CD4-positive, alpha-beta memory T cell (primary cell): ENCODE measurements at regions of chr3 and their contacts with region 1.

Region 1: GRCh38 chr3:44510000-44510368 is 32.5 kb upstream of the ZNF445 start:
- DNase-seq: no peak
- H3K4me3 ChIP-seq: peak overlapping the region; percentile 85 to 92
- H3K4me3 Mint-ChIP-seq: peak overlapping the region; percentile 94 to 98 (median 96)
- H3K27ac ChIP-seq: peak overlapping the region; percentile 75
- H3K27ac Mint-ChIP-seq: peak overlapping the region; percentile 84 to 97 (median 94)
- H3K4me1 ChIP-seq: peaks cover 21% of the 10 kb centered on the region
- H3K4me1 Mint-ChIP-seq: peaks cover 28 to 50% (median 38%) of the 10 kb centered on the region in 4 donors
- H3K27me3 ChIP-seq: no peaks in the 10 kb centered on the region
- H3K27me3 Mint-ChIP-seq: no peaks in the 10 kb centered on the region

Region 2: DNA sequence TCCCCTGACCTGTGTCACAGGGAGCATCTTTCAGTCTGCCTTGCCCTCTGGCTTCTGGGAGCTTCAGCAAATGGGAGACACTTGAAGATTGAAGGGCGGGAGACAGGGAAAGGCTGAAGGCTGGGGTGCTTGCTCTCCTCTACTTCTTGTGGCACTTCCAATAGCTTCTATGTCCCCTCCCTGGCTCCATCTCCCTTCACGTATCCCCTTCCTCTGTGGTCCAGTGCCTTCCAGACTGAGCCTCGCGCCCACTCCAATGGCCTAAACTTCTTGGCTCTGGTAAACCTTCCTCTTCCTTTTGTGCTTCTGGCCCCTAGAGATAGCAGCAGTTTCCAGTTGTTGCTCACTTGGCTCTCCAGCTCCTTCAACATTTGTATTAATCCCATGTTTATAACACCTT is 338.1 kb before region 1 on chr3:
- CTCF ChIA-PET with region 1: no interaction called
- POLR2A ChIA-PET with region 1: no interaction called
- intact Hi-C with region 1: no loop called
- DNase-seq: no peak
- H3K4me3 ChIP-seq: no peak overlapping the region
- H3K4me3 Mint-ChIP-seq: no peak overlapping the region
- H3K27ac ChIP-seq: no peak overlapping the region
- H3K27ac Mint-ChIP-seq: peak overlapping the region in 1 of 7 donors; percentile 14
- H3K4me1 ChIP-seq: no peaks in the 10 kb centered on the region
- H3K4me1 Mint-ChIP-seq: no peaks in the 10 kb centered on the region
- H3K27me3 ChIP-seq: peaks cover 4% of the 10 kb centered on the region
- H3K27me3 Mint-ChIP-seq: peaks cover 6 to 15% of the 10 kb centered on the region in 2 donors

Region 3: DNA sequence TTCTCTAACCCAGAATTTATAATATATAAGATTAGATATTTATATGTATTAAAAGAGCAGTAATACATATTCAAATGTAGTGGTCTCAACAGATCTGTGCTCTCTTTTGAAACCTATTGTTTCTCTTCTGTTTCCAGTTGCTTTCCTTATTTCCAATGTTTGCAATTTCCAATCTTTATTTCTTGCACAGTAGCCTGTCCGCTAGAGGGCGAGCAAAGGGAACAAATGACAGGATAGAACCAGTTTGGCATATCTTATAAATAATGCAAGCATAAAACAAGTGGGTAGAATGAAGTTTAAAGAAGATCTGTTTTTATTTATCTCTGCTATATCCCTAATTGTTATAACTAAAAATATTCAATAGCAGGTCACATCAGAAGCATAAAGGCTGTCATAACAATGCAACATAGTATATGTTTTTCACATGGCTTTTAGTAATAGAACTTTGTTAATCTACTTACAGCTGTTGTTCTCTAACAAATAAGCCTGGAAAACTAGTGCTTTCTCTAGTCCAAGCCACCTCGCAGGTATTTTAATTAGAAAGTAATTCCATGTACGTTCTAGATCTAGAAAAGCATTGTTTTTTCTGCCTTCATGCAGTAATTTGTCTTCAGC is 186.5 kb before region 1 on chr3:
- CTCF ChIA-PET with region 1: interaction called, 3 read pairs
- POLR2A ChIA-PET with region 1: interaction called, 3 read pairs
- intact Hi-C with region 1: loop called (anchors 5 kb)
- DNase-seq: peak in 4 of 5 donors; percentile 39 to 49 (median 46)
- H3K4me3 ChIP-seq: no peak overlapping the region
- H3K4me3 Mint-ChIP-seq: no peak overlapping the region
- H3K27ac ChIP-seq: no peak overlapping the region
- H3K27ac Mint-ChIP-seq: no peak overlapping the region
- H3K4me1 ChIP-seq: no peaks in the 10 kb centered on the region
- H3K4me1 Mint-ChIP-seq: peaks cover 0 to 4% (median 0%) of the 10 kb centered on the region in 4 donors
- H3K27me3 ChIP-seq: no peaks in the 10 kb centered on the region
- H3K27me3 Mint-ChIP-seq: peaks cover 6 to 7% of the 10 kb centered on the region in 2 donors

Region 4: GRCh38 chr3:44363591-44363990 is 146.4 kb before region 1 on chr3:
- CTCF ChIA-PET with region 1: no interaction called
- POLR2A ChIA-PET with region 1: no interaction called
- intact Hi-C with region 1: no loop called
- DNase-seq: no peak
- H3K4me3 ChIP-seq: no peak overlapping the region
- H3K4me3 Mint-ChIP-seq: no peak overlapping the region
- H3K27ac ChIP-seq: no peak overlapping the region
- H3K27ac Mint-ChIP-seq: no peak overlapping the region
- H3K4me1 ChIP-seq: no peaks in the 10 kb centered on the region
- H3K4me1 Mint-ChIP-seq: peaks cover 0 to 3% (median 0%) of the 10 kb centered on the region in 4 donors
- H3K27me3 ChIP-seq: no peaks in the 10 kb centered on the region
- H3K27me3 Mint-ChIP-seq: no peaks in the 10 kb centered on the region

Region 5: GRCh38 chr3:44477312-44478030 is 32.5 kb before region 1 on chr3 and contains the start of gene ZNF445:
- CTCF ChIA-PET with region 1: interaction called, 6 read pairs
- POLR2A ChIA-PET with region 1: interaction called, 32 read pairs
- intact Hi-C with region 1: loop called (anchors 1 kb)
- DNase-seq: peak; percentile 72 to 82 (median 81)
- H3K4me3 ChIP-seq: peak within 1 kb of the TSS; percentile 44 to 68
- H3K4me3 Mint-ChIP-seq: peak within 1 kb of the TSS; percentile 93 to 98 (median 94)
- H3K27ac ChIP-seq: peak within 1 kb of the TSS; percentile 42
- H3K27ac Mint-ChIP-seq: peak within 1 kb of the TSS; percentile 79 to 96 (median 90)
- H3K4me1 ChIP-seq: peaks cover 28% of the 10 kb centered on the region
- H3K4me1 Mint-ChIP-seq: peaks cover 17 to 50% (median 32%) of the 10 kb centered on the region in 4 donors
- H3K27me3 ChIP-seq: no peaks in the 10 kb centered on the region
- H3K27me3 Mint-ChIP-seq: no peaks in the 10 kb centered on the region
- total RNA-seq, gene ZNF445: 30.0 to 31.5 TPM

Region 6: GRCh38 chr3:44554626-44555592 is 44.9 kb after region 1 on chr3 and contains the start of gene ZKSCAN7:
- CTCF ChIA-PET with region 1: no interaction called
- POLR2A ChIA-PET with region 1: interaction called, 17 read pairs
- intact Hi-C with region 1: loop called (anchors 1 kb)
- DNase-seq: peak in 4 of 5 donors; percentile 15 to 38 (median 31)
- H3K4me3 ChIP-seq: peak within 1 kb of the TSS; percentile 81 to 88
- H3K4me3 Mint-ChIP-seq: peak within 1 kb of the TSS; percentile 87 to 96 (median 92)
- H3K27ac ChIP-seq: peak within 1 kb of the TSS; percentile 38
- H3K27ac Mint-ChIP-seq: peak within 1 kb of the TSS; percentile 43 to 95 (median 90)
- H3K4me1 ChIP-seq: peaks cover 10% of the 10 kb centered on the region
- H3K4me1 Mint-ChIP-seq: peaks cover 14 to 22% (median 17%) of the 10 kb centered on the region in 4 donors
- H3K27me3 ChIP-seq: no peaks in the 10 kb centered on the region
- H3K27me3 Mint-ChIP-seq: peaks cover 0 to 4% of the 10 kb centered on the region in 2 donors
- total RNA-seq, gene ZKSCAN7: 4.1 to 4.2 TPM

Region 7: DNA sequence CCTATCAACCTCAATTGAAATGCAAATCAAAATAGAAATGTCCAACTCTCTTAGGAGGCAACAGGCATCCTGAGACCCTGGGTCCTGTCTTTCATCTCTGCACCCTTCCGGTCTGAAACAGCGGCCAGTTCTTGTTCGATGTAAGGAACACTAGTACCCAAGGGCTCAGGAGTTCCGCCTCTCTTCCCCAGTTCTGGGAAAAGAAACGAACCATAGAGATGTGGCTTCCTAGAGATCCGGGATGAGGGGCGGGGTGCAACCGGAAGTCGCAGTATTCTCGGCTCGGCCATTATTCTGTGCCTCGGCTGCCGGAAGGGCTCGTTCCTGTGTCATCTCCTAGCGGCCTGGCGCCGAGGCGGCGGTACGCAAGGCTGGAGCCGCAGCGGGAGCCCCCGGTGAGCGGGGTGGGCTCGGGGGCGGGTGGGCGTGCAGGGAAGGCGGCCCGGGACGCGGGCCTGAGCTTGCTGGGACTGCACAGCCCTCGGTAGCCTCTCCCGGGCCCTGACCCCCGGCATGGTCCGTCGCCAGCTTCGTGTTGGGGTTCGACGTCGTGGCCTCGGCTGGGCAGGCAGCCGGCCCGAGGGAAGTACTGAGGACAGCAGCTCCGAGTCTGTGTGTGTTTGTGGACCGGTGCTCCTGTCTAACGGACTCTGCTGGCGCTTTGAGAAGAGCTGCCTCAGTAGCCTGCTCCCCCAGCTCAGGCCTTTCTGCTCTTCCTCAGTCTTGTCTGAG is 114.9 kb after region 1 on chr3 and contains the start of gene ZNF197:
- CTCF ChIA-PET with region 1: no interaction called
- POLR2A ChIA-PET with region 1: interaction called, 7 read pairs
- intact Hi-C with region 1: loop called (anchors 2 kb)
- DNase-seq: peak; percentile 23 to 44 (median 42)
- H3K4me3 ChIP-seq: peak within 1 kb of the TSS; percentile 47 to 59
- H3K4me3 Mint-ChIP-seq: peak within 1 kb of the TSS; percentile 90 to 95 (median 92)
- H3K27ac ChIP-seq: peak within 1 kb of the TSS; percentile 49
- H3K27ac Mint-ChIP-seq: peak within 1 kb of the TSS; percentile 74 to 92 (median 87)
- H3K4me1 ChIP-seq: peaks cover 21% of the 10 kb centered on the region
- H3K4me1 Mint-ChIP-seq: peaks cover 20 to 47% (median 27%) of the 10 kb centered on the region in 4 donors
- H3K27me3 ChIP-seq: no peaks in the 10 kb centered on the region
- H3K27me3 Mint-ChIP-seq: no peaks in the 10 kb centered on the region
- total RNA-seq, gene ZNF197: 18.0 to 18.4 TPM

Region 8: GRCh38 chr3:44674211-44674610 is 164.2 kb after region 1 on chr3:
- CTCF ChIA-PET with region 1: no interaction called
- POLR2A ChIA-PET with region 1: no interaction called
- intact Hi-C with region 1: no loop called
- DNase-seq: no peak
- H3K4me3 ChIP-seq: no peak overlapping the region
- H3K4me3 Mint-ChIP-seq: no peak overlapping the region
- H3K27ac ChIP-seq: no peak overlapping the region
- H3K27ac Mint-ChIP-seq: no peak overlapping the region
- H3K4me1 ChIP-seq: no peaks in the 10 kb centered on the region
- H3K4me1 Mint-ChIP-seq: no peaks in the 10 kb centered on the region
- H3K27me3 ChIP-seq: no peaks in the 10 kb centered on the region
- H3K27me3 Mint-ChIP-seq: no peaks in the 10 kb centered on the region

Region 9: DNA sequence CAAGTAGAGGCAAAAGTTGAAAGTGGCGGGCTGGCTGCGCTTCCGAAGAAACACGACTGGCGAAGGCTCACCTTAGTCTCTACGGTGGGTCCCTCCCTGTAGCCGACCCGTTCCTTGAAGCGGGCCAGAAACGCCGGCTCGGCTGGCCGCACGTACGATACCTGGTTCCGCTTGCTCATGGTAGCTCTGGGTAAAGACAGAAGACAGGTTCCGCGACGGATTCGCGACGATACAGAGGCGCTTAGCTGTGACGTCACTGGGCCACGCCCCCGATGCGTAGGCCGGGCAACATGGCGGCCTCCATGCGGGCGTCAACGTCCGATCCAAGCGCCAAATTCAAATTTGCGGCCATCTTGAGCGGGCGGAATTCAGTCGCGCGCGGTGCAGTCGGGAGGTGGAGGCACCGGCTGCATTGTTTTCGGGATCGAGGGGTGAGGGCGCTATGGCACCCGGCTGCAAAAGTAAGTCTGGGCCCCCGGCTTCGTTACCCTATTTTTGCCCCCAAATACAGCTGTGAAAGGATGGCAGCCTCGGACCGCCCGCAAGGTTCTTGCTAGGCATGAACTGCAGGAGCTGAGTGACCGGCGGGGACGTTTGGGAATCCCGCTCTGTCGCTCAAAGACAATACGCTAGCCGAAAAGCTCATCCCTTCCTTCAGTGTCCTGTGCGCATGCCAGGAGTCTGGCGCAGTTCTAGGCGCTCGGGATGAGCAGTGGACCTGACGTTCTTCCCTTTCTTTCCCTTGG is 251.6 kb after region 1 on chr3 and contains the starts of genes KIAA1143 and KIF15:
- CTCF ChIA-PET with region 1: no interaction called
- POLR2A ChIA-PET with region 1: interaction called, 13 read pairs
- intact Hi-C with region 1: loop called (anchors 1 kb)
- DNase-seq: peak; percentile 92 to 96 (median 93)
- H3K4me3 ChIP-seq: peak within 1 kb of the TSS; percentile 71 to 98
- H3K4me3 Mint-ChIP-seq: peak within 1 kb of the TSS; percentile 86 to 98 (median 92)
- H3K27ac ChIP-seq: peak within 1 kb of the TSS; percentile 84
- H3K27ac Mint-ChIP-seq: peak within 1 kb of the TSS; percentile 92 to 97 (median 94)
- H3K4me1 ChIP-seq: peaks cover 23% of the 10 kb centered on the region
- H3K4me1 Mint-ChIP-seq: peaks cover 21 to 42% (median 33%) of the 10 kb centered on the region in 4 donors
- H3K27me3 ChIP-seq: no peaks in the 10 kb centered on the region
- H3K27me3 Mint-ChIP-seq: peaks cover 0 to 1% of the 10 kb centered on the region in 2 donors
- total RNA-seq, gene KIAA1143: 37.6 to 39.7 TPM
- total RNA-seq, gene KIF15: 0.19 to 0.38 TPM

Region 10: DNA sequence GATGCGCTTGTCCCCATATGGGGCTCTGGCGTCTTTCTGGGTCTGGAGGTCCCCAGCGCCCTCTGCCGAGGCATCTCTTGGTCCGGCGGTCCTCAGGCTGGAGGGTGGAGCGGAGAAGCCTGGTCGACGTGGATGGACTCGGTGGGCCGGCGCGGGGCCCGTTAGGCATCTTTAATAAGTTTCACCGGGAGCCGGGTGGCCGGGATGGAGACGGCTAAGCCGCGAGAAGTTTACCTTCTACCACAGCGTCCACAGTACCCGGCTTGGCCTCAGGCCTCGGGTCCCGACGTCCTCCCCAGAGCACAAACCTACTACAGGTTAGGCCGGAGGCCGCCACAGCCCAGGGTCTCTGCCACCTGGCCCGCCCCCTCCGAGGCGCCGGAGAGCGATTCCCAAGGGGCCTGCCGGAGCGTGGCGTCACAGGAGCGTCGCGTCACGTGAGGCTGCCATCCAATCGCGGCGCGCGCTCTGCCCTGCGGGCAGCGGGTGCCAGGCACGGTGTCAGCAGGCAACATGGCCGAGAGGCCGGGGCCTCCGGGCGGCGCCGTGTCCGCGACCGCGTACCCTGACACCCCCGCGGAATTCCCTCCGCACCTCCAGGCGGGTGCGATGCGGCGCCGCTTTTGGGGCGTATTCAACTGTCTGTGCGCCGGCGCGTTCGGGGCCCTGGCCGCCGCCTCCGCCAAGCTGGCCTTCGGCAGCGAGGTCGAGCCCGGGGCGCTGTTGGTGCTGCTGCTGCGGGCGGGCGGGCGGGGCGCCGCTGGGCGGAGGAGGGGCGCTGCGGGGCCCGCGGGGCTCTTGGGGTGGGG is 351.6 kb after region 1 on chr3 and contains the start of gene TMEM42:
- CTCF ChIA-PET with region 1: no interaction called
- POLR2A ChIA-PET with region 1: interaction called, 6 read pairs
- intact Hi-C with region 1: loop called (anchors 2 kb)
- DNase-seq: peak; percentile 84 to 91 (median 88)
- H3K4me3 ChIP-seq: peak within 1 kb of the TSS; percentile 46 to 85
- H3K4me3 Mint-ChIP-seq: peak within 1 kb of the TSS; percentile 88 to 93 (median 90)
- H3K27ac ChIP-seq: peak within 1 kb of the TSS; percentile 88
- H3K27ac Mint-ChIP-seq: peak within 1 kb of the TSS; percentile 90 to 98 (median 94)
- H3K4me1 ChIP-seq: peaks cover 38% of the 10 kb centered on the region
- H3K4me1 Mint-ChIP-seq: peaks cover 19 to 47% (median 36%) of the 10 kb centered on the region in 4 donors
- H3K27me3 ChIP-seq: no peaks in the 10 kb centered on the region
- H3K27me3 Mint-ChIP-seq: no peaks in the 10 kb centered on the region
- total RNA-seq, gene TMEM42: 26.1 to 29.6 TPM